MCF 10A (cell line): ENCODE measurements at regions of chr12 and their contacts with region 1.

Region 1: DNA sequence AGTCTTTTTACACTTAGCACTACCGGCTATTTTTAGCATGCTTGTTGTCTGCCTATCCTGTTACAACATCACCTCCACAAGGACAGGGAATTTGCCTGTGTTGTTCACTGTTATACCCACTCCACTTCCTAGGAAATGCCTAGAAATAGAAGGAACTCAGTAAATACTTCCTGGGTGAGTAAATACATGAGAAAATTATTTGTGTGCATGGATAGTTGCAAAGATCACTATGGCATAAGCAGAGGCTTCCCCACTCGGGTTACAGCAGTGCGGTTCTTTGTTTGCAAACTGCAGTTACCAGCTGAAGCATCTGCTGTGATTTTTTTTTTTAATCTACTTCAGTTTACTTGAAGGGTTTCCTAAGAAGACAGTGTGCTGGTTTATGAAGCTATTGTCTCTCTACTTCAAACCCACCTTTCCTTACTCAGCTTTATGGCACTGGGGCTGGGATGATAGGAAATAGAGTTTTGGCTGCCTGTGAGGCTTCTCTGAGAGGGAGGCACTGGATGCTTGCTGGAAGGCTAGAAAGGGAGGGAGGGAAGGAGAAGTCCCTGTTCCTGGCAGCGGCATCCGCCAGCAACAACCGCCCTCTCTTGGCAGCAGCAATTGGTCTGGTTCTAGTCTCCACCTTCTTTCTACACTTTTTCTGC is 29.0 kb downstream of the PDE6H start:
- DNase-seq: peak; percentile 29
- H3K4me3 Mint-ChIP-seq: no peak overlapping the region
- H3K27ac Mint-ChIP-seq: no peak overlapping the region
- H3K4me1 Mint-ChIP-seq: peaks cover 23% of the 10 kb centered on the region
- H3K27me3 Mint-ChIP-seq: no peaks in the 10 kb centered on the region
- CTCF ChIP-seq: no peak

Region 2: GRCh38 chr12:15522565-15523187 is 520.8 kb after region 1 on chr12:
- CTCF ChIA-PET with region 1: no interaction called
- POLR2A ChIA-PET with region 1: no interaction called
- intact Hi-C with region 1: loop called (anchors 2 kb)
- DNase-seq: peak; percentile 68
- H3K4me3 Mint-ChIP-seq: no peak overlapping the region
- H3K27ac Mint-ChIP-seq: no peak overlapping the region
- H3K4me1 Mint-ChIP-seq: peaks cover 17% of the 10 kb centered on the region
- H3K27me3 Mint-ChIP-seq: no peaks in the 10 kb centered on the region
- CTCF ChIP-seq: peak; percentile 69